A549 (cell line): ENCODE measurements at regions of chr14 and their contacts with region 1.

Region 1: DNA sequence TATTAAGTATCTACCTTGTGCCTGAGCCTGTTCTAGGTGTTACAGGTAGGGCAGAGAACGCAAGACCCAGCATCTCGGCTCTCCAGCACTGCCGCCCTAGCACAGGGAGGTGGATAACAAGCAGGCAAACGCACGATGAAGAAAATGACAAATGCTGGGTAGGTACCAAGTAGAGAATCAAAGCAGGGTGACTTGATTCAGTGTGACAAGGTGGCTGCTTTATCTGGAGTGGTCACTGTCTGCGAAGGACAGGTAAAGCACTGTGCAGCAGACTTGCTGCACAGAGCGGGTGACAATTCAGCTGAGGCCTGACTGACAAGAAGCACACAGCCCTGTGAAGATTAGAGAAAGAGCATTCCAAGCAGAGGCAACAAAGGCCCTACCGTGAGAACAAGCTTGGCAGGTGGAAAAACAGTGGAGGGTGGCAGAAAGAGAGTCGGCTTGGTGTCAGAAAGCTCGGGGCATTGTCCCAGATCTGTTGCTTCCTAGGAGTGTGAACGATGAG is 12.9 kb downstream of the PRKCH start:
- DNase-seq: no peak
- ATAC-seq: no peak
- H3K4me3 ChIP-seq: no peak overlapping the region
- H3K27ac ChIP-seq: no peak overlapping the region
- H3K4me1 ChIP-seq: 0 out of 3 replicates have a peak, but pooled peaks cover 5% of the 10 kb centered on the region
- CTCF ChIP-seq: no peak
- EP300 ChIP-seq: no peak
- POLR2A ChIP-seq: no peak
- RAD21 ChIP-seq: no peak

Region 2: GRCh38 chr14:61321385-61322010 is 12.8 kb before region 1 on chr14 and contains the start of gene PRKCH:
- CTCF ChIA-PET with region 1: interaction called, 12 read pairs
- POLR2A ChIA-PET with region 1: no interaction called
- DNase-seq: peak; percentile 65
- ATAC-seq: peak; percentile 84 to 90
- H3K4me3 ChIP-seq: peak within 1 kb of the TSS; percentile 69
- H3K27ac ChIP-seq: peak within 1 kb of the TSS; percentile 66 to 84
- H3K4me1 ChIP-seq: peaks cover 6% of the 10 kb centered on the region; the same call in 1 of the 3 replicates
- CTCF ChIP-seq: peak; percentile 36
- EP300 ChIP-seq: no peak
- POLR2A ChIP-seq: no peak
- RAD21 ChIP-seq: peak; percentile 5 to 42; a peak in 3 of 5 replicates
- polyA plus RNA-seq, gene PRKCH: 8.5 and 10.0 TPM in 2 replicates